T-cell (primary cell): ENCODE measurements at regions of chr19 and their contacts with region 1.

Region 1: GRCh38 chr19:40570313-40571004 is 6.2 kb upstream of the SHKBP1 start:
- DNase-seq: peak; percentile 85 to 100 (median 95)
- ATAC-seq: peak; percentile 86 to 90 (median 88)
- H3K4me3 ChIP-seq: peak overlapping the region in 1 of 2 donors; percentile 36
- H3K4me3 Mint-ChIP-seq: peak overlapping the region; percentile 53 to 69 (median 68)
- H3K27ac ChIP-seq: no peak overlapping the region
- H3K27ac Mint-ChIP-seq: peak overlapping the region; percentile 77 to 83
- H3K4me1 ChIP-seq: peaks cover 0 to 28% of the 10 kb centered on the region in 2 experiments
- H3K4me1 Mint-ChIP-seq: peaks cover 12 to 23% (median 13%) of the 10 kb centered on the region in 3 donors
- H3K27me3 ChIP-seq: peaks cover 8 to 39% of the 10 kb centered on the region in 2 experiments
- H3K27me3 Mint-ChIP-seq: peaks cover 3 to 23% of the 10 kb centered on the region in 2 donors

Region 2: DNA sequence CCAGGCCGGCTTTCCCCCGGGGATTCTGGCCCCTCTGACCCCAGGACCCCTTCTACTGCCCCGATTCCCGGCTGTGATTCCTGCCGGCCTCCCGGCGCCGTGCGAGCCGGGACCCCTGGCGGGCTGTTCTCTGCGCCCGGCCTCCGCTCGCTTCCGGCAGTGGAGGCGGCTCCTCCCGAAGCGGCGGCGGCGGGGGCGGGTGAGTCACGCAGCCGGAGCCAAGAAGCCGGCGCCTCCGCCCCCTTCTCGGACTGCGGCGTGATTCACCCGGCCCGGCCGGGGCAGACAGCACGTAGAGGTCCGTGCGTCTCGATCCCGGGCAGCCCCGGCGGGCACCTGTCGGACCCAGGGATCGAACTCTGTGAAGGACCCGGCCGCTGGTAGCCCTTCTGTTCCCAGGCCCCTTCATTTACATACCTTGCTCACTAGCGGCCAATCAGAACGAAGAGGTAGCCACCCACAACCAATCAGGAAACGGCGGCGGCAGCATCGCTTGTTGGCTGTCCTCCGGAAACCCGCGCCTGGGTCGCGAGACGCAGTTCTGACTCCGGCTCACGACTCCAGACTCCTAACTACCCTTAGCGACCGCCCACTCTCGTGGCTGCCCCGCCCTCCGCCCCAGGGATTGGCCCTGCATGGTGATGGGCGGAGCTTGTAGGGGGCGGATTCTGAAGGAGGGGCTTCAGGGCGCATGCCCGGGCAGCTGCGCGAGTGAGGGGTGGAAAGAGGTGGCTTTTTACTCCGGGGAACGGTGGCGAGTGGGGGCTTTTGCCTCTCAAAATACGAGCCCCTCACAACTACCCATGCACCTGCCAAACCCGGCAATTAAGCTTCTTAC is 144.8 kb before region 1 on chr19 and contains the start of gene SERTAD1:
- CTCF ChIA-PET with region 1: interaction called in 1 of 2 experiments, 12 read pairs
- POLR2A ChIA-PET with region 1: interaction called in 1 of 2 experiments, 4 read pairs
- DNase-seq: peak; percentile 99 to 100 (median 100)
- ATAC-seq: peak; percentile 82 to 92 (median 88)
- H3K4me3 ChIP-seq: peak within 1 kb of the TSS; percentile 90 to 99
- H3K4me3 Mint-ChIP-seq: peak within 1 kb of the TSS; percentile 85 to 98 (median 94)
- H3K27ac ChIP-seq: peak within 1 kb of the TSS; percentile 89
- H3K27ac Mint-ChIP-seq: peak within 1 kb of the TSS; percentile 97 to 99
- H3K4me1 ChIP-seq: peaks cover 12 to 39% of the 10 kb centered on the region in 2 experiments
- H3K4me1 Mint-ChIP-seq: peaks cover 26 to 32% (median 32%) of the 10 kb centered on the region in 3 donors
- H3K27me3 ChIP-seq: no peaks in the 10 kb centered on the region
- H3K27me3 Mint-ChIP-seq: no peaks in the 10 kb centered on the region
- total RNA-seq, gene SERTAD1: 10.9 to 25.4 (median 13.3) TPM

Region 3: GRCh38 chr19:40523322-40524047 is 47.0 kb before region 1 on chr19:
- CTCF ChIA-PET with region 1: no interaction called
- POLR2A ChIA-PET with region 1: no interaction called
- DNase-seq: peak in 28 of 35 experiments; percentile 9 to 58 (median 26)
- ATAC-seq: peak; percentile 43 to 78 (median 50)
- H3K4me3 ChIP-seq: no peak overlapping the region
- H3K4me3 Mint-ChIP-seq: no peak overlapping the region
- H3K27ac ChIP-seq: no peak overlapping the region
- H3K27ac Mint-ChIP-seq: no peak overlapping the region
- H3K4me1 ChIP-seq: no peaks in the 10 kb centered on the region
- H3K4me1 Mint-ChIP-seq: peaks cover 4 to 5% (median 5%) of the 10 kb centered on the region in 3 donors
- H3K27me3 ChIP-seq: peaks cover 6 to 35% of the 10 kb centered on the region in 2 experiments
- H3K27me3 Mint-ChIP-seq: peaks cover 16 to 23% of the 10 kb centered on the region in 2 donors

Region 4: GRCh38 chr19:40560092-40560507 is 10.4 kb before region 1 on chr19:
- CTCF ChIA-PET with region 1: no interaction called
- POLR2A ChIA-PET with region 1: no interaction called
- DNase-seq: no peak
- ATAC-seq: peak in 1 of 4 experiments; percentile 10
- H3K4me3 ChIP-seq: no peak overlapping the region
- H3K4me3 Mint-ChIP-seq: no peak overlapping the region
- H3K27ac ChIP-seq: no peak overlapping the region
- H3K27ac Mint-ChIP-seq: no peak overlapping the region
- H3K4me1 ChIP-seq: peaks cover 0 to 4% of the 10 kb centered on the region in 2 experiments
- H3K4me1 Mint-ChIP-seq: peaks cover 5 to 12% (median 7%) of the 10 kb centered on the region in 3 donors
- H3K27me3 ChIP-seq: peaks cover 0 to 70% of the 10 kb centered on the region in 2 experiments
- H3K27me3 Mint-ChIP-seq: peaks cover 25 to 53% of the 10 kb centered on the region in 2 donors

Region 5: GRCh38 chr19:40603389-40604135 is 33.1 kb after region 1 on chr19:
- CTCF ChIA-PET with region 1: interaction called in 1 of 2 experiments, 28 read pairs
- POLR2A ChIA-PET with region 1: interaction called in 1 of 2 experiments, 3 read pairs
- DNase-seq: peak; percentile 89 to 98 (median 96)
- ATAC-seq: peak; percentile 70 to 78 (median 72)
- H3K4me3 ChIP-seq: peak overlapping the region in 1 of 2 donors; percentile 57
- H3K4me3 Mint-ChIP-seq: peak overlapping the region; percentile 80 to 84 (median 83)
- H3K27ac ChIP-seq: peak overlapping the region; percentile 43
- H3K27ac Mint-ChIP-seq: peak overlapping the region; percentile 79 to 94
- H3K4me1 ChIP-seq: peaks cover 17 to 94% of the 10 kb centered on the region in 2 experiments
- H3K4me1 Mint-ChIP-seq: peaks cover 70 to 77% (median 71%) of the 10 kb centered on the region in 3 donors
- H3K27me3 ChIP-seq: peaks cover 4 to 45% of the 10 kb centered on the region in 2 experiments
- H3K27me3 Mint-ChIP-seq: peaks cover 17 to 29% of the 10 kb centered on the region in 2 donors

Region 6: DNA sequence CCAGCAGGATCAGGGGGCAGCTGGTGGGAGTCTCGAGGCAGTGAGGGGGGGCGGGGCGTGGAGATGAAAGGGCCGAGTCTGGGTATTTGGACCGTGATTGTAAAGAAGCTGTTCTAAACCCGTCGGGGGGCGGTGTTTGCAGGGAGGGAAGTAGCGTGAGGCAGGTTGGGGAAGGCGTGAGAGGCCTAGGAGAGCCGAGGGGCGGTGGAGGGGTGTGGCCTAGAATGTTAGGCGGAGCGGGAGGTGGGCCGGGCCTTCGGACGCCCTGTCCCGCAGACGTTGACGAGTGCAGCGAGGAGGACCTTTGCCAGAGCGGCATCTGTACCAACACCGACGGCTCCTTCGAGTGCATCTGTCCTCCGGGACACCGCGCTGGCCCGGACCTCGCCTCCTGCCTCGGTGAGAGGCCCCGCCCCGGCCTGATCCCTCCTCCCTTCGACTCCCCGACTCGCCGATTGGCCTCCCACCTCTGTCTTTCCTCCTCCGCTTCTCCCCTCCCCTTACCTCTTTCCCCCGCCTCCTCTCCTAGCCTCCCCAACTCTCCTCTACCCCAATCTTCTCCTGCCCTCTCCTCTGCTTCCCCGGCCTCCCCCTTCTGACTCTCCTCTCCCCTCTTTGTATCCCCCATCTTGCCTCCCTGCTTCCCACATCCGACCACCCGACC is 43.3 kb after region 1 on chr19:
- CTCF ChIA-PET with region 1: no interaction called
- POLR2A ChIA-PET with region 1: no interaction called
- DNase-seq: peak; percentile 67 to 89 (median 81)
- ATAC-seq: peak; percentile 66 to 77 (median 72)
- H3K4me3 ChIP-seq: peak overlapping the region; percentile 67 to 83
- H3K4me3 Mint-ChIP-seq: peak overlapping the region; percentile 85 to 93 (median 91)
- H3K27ac ChIP-seq: peak overlapping the region; percentile 70
- H3K27ac Mint-ChIP-seq: peak overlapping the region; percentile 93
- H3K4me1 ChIP-seq: peaks cover 13 to 65% of the 10 kb centered on the region in 2 experiments
- H3K4me1 Mint-ChIP-seq: peaks cover 47 to 65% (median 64%) of the 10 kb centered on the region in 3 donors
- H3K27me3 ChIP-seq: no peaks in the 10 kb centered on the region
- H3K27me3 Mint-ChIP-seq: no peaks in the 10 kb centered on the region

Region 7: GRCh38 chr19:40633207-40633606 is 62.7 kb after region 1 on chr19:
- CTCF ChIA-PET with region 1: interaction called in 1 of 2 experiments, 11 read pairs
- POLR2A ChIA-PET with region 1: no interaction called
- DNase-seq: no peak
- ATAC-seq: no peak
- H3K4me3 ChIP-seq: no peak overlapping the region
- H3K4me3 Mint-ChIP-seq: no peak overlapping the region
- H3K27ac ChIP-seq: no peak overlapping the region
- H3K27ac Mint-ChIP-seq: no peak overlapping the region
- H3K4me1 ChIP-seq: peaks cover 0 to 12% of the 10 kb centered on the region in 2 experiments
- H3K4me1 Mint-ChIP-seq: peaks cover 7 to 25% (median 9%) of the 10 kb centered on the region in 3 donors
- H3K27me3 ChIP-seq: peaks cover 0 to 14% of the 10 kb centered on the region in 2 experiments
- H3K27me3 Mint-ChIP-seq: peaks cover 0 to 3% of the 10 kb centered on the region in 2 donors

Region 8: DNA sequence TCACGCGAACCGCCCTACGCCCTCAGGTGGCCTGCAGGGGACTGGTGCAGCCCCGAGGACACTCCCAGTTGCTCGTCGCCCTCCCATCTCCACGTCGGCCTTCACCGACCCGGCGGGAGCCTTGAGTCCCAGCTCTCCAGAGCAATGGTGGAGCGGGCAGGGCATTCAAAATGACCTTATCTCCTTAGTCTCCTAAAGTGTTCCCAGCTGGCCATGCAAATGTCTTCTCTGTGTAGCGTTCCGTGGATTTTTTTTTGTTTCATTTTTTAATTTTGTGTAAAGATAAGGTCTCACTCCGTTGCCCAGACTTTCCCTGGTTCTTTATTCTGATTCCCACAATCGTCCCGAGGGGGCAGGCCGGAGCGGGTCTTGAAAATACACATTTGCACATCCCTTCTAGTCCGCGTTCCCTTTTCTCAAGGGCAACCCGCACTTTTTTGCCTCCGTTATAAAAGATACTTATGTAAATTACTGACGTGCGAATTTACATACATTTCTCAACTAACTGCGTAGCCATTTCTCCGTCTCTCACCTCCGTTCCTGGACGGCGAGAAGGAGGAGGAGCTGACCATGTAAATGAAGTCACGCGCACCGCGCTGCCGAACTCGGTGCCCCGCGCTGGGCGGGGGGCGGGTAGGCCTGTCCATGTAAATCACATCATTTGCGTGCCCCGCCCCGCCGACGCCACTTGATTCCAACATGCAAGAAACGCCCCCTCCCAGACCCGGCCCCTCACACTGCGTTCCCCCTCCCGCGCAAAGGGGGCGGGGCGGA is 228.0 kb after region 1 on chr19:
- CTCF ChIA-PET with region 1: no interaction called
- POLR2A ChIA-PET with region 1: interaction called in 1 of 2 experiments, 15 read pairs
- DNase-seq: peak; percentile 100
- ATAC-seq: peak; percentile 25 to 84 (median 78)
- H3K4me3 ChIP-seq: peak overlapping the region; percentile 86 to 87
- H3K4me3 Mint-ChIP-seq: peak overlapping the region; percentile 92 to 94 (median 93)
- H3K27ac ChIP-seq: peak overlapping the region; percentile 99
- H3K27ac Mint-ChIP-seq: peak overlapping the region; percentile 98 to 99
- H3K4me1 ChIP-seq: peaks cover 30 to 49% of the 10 kb centered on the region in 2 experiments
- H3K4me1 Mint-ChIP-seq: peaks cover 46 to 52% (median 50%) of the 10 kb centered on the region in 3 donors
- H3K27me3 ChIP-seq: no peaks in the 10 kb centered on the region
- H3K27me3 Mint-ChIP-seq: no peaks in the 10 kb centered on the region

Region 9: GRCh38 chr19:42540071-42540553 is 1969.7 kb after region 1 on chr19:
- CTCF ChIA-PET with region 1: no interaction called
- POLR2A ChIA-PET with region 1: no interaction called
- DNase-seq: no peak
- ATAC-seq: no peak
- H3K4me3 ChIP-seq: no peak overlapping the region
- H3K4me3 Mint-ChIP-seq: no peak overlapping the region
- H3K27ac ChIP-seq: no peak overlapping the region
- H3K27ac Mint-ChIP-seq: no peak overlapping the region
- H3K4me1 ChIP-seq: no peaks in the 10 kb centered on the region
- H3K4me1 Mint-ChIP-seq: no peaks in the 10 kb centered on the region
- H3K27me3 ChIP-seq: peaks cover 0 to 24% of the 10 kb centered on the region in 2 experiments
- H3K27me3 Mint-ChIP-seq: peaks cover 0 to 4% of the 10 kb centered on the region in 2 donors